Ovary (tissue), 10 donors: ENCODE measurements at regions of chr9 and their contacts with region 1.

Region 1: DNA sequence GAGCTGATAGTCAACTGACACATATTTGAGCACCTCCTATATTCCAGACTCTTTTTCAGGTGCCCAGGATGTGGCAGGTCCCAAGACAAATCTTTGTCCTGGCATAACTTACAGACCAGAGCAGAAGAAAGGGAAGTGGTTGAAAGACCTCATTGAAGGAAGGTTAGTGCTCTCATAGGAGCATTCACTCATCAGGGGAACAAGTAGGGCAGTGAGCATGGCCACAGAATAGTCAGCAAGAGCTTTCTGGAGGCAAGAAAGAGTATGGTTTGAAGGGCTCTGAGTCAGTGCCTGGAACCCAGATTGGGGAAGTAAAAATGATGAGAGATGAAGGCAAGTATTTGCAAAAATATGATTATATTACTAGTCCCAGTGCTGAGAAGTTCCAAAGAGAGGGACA is 25.0 kb upstream of the ERMP1 start:
- DNase-seq: no peak
- H3K4me3 ChIP-seq: no peak overlapping the region
- H3K27ac ChIP-seq: no peak overlapping the region
- H3K4me1 ChIP-seq: no peaks in the 10 kb centered on the region
- H3K27me3 ChIP-seq: no peaks in the 10 kb centered on the region
- CTCF ChIP-seq: no peak
- EP300 ChIP-seq: no peak
- POLR2A ChIP-seq: no peak

Region 2: DNA sequence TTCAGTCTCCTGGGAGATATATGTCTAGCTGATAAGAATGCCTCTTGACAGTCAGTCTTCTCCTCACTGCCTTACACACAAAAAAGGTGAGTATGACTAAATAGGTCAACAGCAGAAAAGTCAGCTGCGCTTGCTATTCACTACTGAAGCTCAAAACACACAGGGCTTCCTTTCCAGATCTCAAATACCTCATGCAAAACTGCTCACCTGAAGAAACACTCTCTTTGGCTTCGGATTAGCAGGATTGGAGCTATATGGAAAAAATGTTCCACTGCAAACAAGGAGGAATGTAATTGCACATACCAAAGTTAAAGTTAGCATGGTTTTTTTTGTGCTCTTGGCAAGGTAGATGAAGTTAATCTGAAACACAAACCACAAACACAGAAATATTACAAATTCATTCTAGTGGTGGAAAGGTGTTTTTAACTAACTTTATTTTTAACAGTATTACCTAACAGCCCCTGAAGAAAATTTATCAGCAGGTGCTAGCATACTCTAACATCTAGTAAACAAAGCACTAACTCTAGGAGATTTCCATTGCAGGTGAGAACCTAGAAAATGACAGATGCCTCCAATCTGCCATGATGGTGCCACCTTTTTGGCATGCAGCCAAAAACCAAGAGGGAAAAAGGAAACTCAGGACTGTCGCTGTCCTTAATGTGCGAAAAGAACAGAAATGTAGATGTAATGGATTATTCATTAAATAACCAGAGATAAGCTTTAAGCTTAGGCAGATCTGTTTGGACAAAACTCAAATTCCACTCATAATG is 56.8 kb before region 1 on chr9:
- intact Hi-C with region 1: loop called in 1 of 4 experiments (anchors 2 kb)
- DNase-seq: no peak
- H3K4me3 ChIP-seq: no peak overlapping the region
- H3K27ac ChIP-seq: no peak overlapping the region
- H3K4me1 ChIP-seq: peaks cover 2% of the 10 kb centered on the region
- H3K27me3 ChIP-seq: no peaks in the 10 kb centered on the region
- CTCF ChIP-seq: no peak
- EP300 ChIP-seq: no peak
- POLR2A ChIP-seq: no peak